AG04450 (cell line): ENCODE measurements at regions of chr19 and their contacts with region 1.

Region 1: GRCh38 chr19:11137542-11138384 is 17.8 kb downstream of the SPC24 start:
- DNase-seq: peak; percentile 69
- H3K4me3 ChIP-seq: peak overlapping the region; percentile 31; the same call in 1 of the 2 replicates
- H3K27ac ChIP-seq: peak overlapping the region; percentile 61
- H3K27me3 ChIP-seq: no peaks in the 10 kb centered on the region
- CTCF ChIP-seq: peak; percentile 83

Region 2: GRCh38 chr19:10984166-10984735 is 153.5 kb before region 1 on chr19:
- CTCF ChIA-PET with region 1: no interaction called
- POLR2A ChIA-PET with region 1: no interaction called
- DNase-seq: no peak
- H3K4me3 ChIP-seq: no peak overlapping the region
- H3K27ac ChIP-seq: no peak overlapping the region
- H3K27me3 ChIP-seq: no peaks in the 10 kb centered on the region
- CTCF ChIP-seq: no peak

Region 3: DNA sequence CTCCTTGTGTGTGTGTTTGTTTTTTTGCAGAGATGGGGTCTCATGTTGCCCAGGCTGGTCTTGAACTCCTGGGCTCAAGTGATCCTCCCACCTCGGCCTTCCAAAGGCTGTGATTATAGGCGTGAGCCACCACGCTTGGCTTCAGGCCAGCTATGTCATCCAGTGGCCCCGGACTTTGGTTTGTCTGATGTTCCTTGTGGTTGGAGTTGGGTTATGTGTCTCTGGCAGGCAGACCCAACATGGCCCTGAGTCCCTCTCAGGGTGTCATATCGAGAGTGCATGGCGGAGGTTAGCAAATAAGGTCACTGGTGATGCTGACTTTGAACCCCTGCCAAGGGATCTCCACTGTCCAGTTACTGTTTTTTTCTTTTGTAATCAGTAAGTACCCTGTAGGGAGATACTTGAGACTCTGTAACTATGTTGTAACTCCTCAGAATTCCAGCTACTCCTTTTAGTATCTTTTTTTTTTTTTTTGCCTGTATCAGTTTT is 139.7 kb before region 1 on chr19:
- CTCF ChIA-PET with region 1: no interaction called
- POLR2A ChIA-PET with region 1: no interaction called
- DNase-seq: no peak
- H3K4me3 ChIP-seq: no peak overlapping the region
- H3K27ac ChIP-seq: no peak overlapping the region
- H3K27me3 ChIP-seq: no peaks in the 10 kb centered on the region
- CTCF ChIP-seq: no peak

Region 4: DNA sequence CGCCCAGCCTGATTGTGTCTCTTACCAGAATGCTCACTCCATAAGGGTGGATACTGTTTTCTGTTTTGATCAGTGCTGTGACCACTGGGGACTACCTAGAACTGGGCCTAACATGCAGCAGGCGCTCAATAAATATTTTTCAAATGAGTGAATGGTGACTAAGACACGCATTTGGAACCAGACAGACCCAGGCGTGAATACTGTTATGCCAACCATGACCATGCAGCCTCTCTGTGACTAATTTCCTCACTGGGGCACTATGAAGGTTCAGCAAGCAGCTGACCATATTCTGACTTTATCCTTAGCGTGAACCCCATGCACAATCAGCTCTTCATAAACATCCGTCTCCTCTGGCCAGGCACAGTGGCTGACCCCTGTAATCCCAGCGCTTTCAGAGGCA is 30.8 kb after region 1 on chr19:
- CTCF ChIA-PET with region 1: interaction called, 6 read pairs
- POLR2A ChIA-PET with region 1: interaction called, 12 read pairs
- DNase-seq: peak; percentile 69
- H3K4me3 ChIP-seq: no peak overlapping the region
- H3K27ac ChIP-seq: peak overlapping the region; percentile 78
- H3K27me3 ChIP-seq: no peaks in the 10 kb centered on the region
- CTCF ChIP-seq: no peak

Region 5: GRCh38 chr19:11203194-11204075 is 65.7 kb after region 1 on chr19:
- CTCF ChIA-PET with region 1: interaction called, 29 read pairs
- POLR2A ChIA-PET with region 1: no interaction called
- DNase-seq: peak; percentile 30
- H3K4me3 ChIP-seq: no peak overlapping the region
- H3K27ac ChIP-seq: peak overlapping the region; percentile 73
- H3K27me3 ChIP-seq: no peaks in the 10 kb centered on the region
- CTCF ChIP-seq: peak; percentile 87